ENCODE measurements at regions of chrX and their contacts with region 1.

Region 1: GRCh38 chrX:1673337-1673736 is 58.5 kb downstream of the ASMT start:
- DNase-seq: peak; percentile 27
- ATAC-seq: peak; percentile 47; the same call in 2 of the 3 replicates
- H3K4me3 ChIP-seq: no peak overlapping the region
- H3K27ac ChIP-seq: no peak overlapping the region
- H3K4me1 ChIP-seq: no peaks in the 10 kb centered on the region
- H3K27me3 ChIP-seq: no peaks in the 10 kb centered on the region; a peak in 1 of 5 replicates
- CTCF ChIP-seq: peak; percentile 71
- EP300 ChIP-seq: no peak
- POLR2A ChIP-seq: no peak
- RAD21 ChIP-seq: peak; percentile 28; the same call in 1 of the 2 replicates

Region 2: GRCh38 chrX:1380672-1381233 is 292.6 kb before region 1 on chrX:
- CTCF ChIA-PET with region 1: no interaction called
- POLR2A ChIA-PET with region 1: no interaction called
- in situ Hi-C with region 1: no loop called
- intact Hi-C with region 1: no loop called
- DNase-seq: no peak
- ATAC-seq: peak; percentile 13
- H3K4me3 ChIP-seq: no peak overlapping the region
- H3K27ac ChIP-seq: no peak overlapping the region
- H3K4me1 ChIP-seq: peaks cover 25% of the 10 kb centered on the region
- H3K27me3 ChIP-seq: no peaks in the 10 kb centered on the region
- CTCF ChIP-seq: no peak
- EP300 ChIP-seq: no peak
- POLR2A ChIP-seq: peak in 1 of 2 experiments; percentile 28; a peak in 1 of 4 replicates
- RAD21 ChIP-seq: 0 out of 2 replicates have a peak, but pooled peaks have one; percentile 9

Region 3: DNA sequence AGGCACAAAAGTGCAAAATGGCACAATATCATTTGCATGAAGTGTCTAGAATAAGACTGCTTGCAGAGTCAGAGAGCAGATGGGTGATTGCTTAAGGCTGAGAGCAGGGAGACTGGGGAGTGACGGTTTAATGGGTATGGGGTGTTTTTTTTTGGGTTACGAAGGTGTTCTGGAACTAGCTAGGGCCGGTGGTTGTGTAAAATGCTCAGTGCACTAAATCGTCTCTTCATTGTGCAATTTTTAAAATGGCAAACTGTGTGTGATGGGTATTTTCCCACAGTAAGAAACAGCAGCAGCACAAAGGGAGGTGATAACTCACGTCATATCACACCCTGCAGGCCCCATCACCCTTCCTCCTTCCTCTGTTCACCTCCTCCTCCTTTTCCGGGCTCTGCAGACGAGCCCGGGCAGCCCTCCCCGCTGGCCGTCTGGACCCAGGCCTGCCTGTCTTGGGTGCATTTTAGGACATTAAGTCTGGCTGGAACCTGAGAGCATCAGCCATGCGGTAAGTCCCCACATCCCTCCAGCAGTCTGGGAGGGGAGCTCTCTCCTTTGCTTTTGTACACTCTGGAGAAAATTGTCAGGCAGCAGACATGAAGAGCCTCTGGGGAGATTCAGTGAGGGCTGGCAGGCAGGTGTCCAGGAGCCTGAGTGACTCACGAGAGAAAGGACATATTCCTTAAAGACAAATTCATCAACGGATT is 15.8 kb before region 1 on chrX:
- CTCF ChIA-PET with region 1: no interaction called
- POLR2A ChIA-PET with region 1: no interaction called
- in situ Hi-C with region 1: no loop called
- intact Hi-C with region 1: no loop called
- DNase-seq: no peak
- ATAC-seq: peak; percentile 57
- H3K4me3 ChIP-seq: no peak overlapping the region
- H3K27ac ChIP-seq: no peak overlapping the region
- H3K4me1 ChIP-seq: no peaks in the 10 kb centered on the region
- H3K27me3 ChIP-seq: no peaks in the 10 kb centered on the region
- CTCF ChIP-seq: peak; percentile 17; the same call in 1 of the 2 replicates
- EP300 ChIP-seq: no peak
- POLR2A ChIP-seq: no peak
- RAD21 ChIP-seq: no peak

Region 4: DNA sequence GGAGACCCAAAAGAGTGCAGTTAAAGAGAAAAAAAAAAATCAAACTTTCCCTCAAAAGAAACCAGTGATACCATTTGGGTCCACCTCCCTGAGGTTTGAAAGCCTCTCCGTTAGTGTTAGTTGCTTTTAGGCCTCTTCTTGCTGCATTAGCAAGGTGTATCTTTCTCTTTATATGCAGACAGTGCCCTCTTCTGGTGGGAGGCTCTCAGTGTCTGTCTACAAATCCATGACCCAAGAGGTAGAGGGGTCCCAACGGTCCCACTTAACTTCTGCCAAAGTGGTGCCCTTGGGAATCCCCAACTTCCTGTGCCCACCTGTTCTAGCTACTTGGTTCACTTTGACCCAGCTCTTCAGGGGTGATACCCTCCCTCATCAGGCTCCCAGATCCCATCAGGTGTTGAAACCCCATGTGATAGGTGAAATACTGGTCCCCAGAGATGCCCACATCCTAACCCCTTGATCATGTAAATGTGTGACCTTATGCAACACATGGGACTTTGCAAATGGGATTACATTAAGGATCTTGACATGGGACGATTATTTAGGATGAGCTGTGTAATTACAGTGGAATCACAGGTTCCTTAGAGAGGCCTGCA is 954.0 kb after region 1 on chrX:
- CTCF ChIA-PET with region 1: no interaction called
- POLR2A ChIA-PET with region 1: no interaction called
- in situ Hi-C with region 1: no loop called
- intact Hi-C with region 1: loop called (anchors 1 kb)
- DNase-seq: peak; percentile 71
- ATAC-seq: peak; percentile 92
- H3K4me3 ChIP-seq: no peak overlapping the region
- H3K27ac ChIP-seq: no peak overlapping the region
- H3K4me1 ChIP-seq: no peaks in the 10 kb centered on the region
- H3K27me3 ChIP-seq: no peaks in the 10 kb centered on the region
- CTCF ChIP-seq: peak; percentile 74
- EP300 ChIP-seq: no peak
- POLR2A ChIP-seq: no peak
- RAD21 ChIP-seq: peak; percentile 69